Left lung (tissue), 14 donors: ENCODE measurements at regions of chr14 and their contacts with region 1.

Region 1: GRCh38 chr14:57317316-57317715 is 48.5 kb downstream of the AP5M1 start:
- DNase-seq: peak in 3 of 4 donors; percentile 51 to 78 (median 61)
- ATAC-seq: peak; percentile 93
- H3K4me3 ChIP-seq: no peak overlapping the region
- H3K27ac ChIP-seq: no peak overlapping the region
- H3K4me1 ChIP-seq: no peaks in the 10 kb centered on the region
- H3K27me3 ChIP-seq: peaks cover 0 to 4% of the 10 kb centered on the region in 2 donors
- CTCF ChIP-seq: peak; percentile 74 to 88

Region 2: GRCh38 chr14:56491299-56492285 is 825.7 kb before region 1 on chr14:
- intact Hi-C with region 1: loop called in 1 of 2 experiments (anchors 5 kb)
- DNase-seq: peak in 1 of 4 donors; percentile 44
- ATAC-seq: peak; percentile 79
- H3K4me3 ChIP-seq: no peak overlapping the region
- H3K27ac ChIP-seq: no peak overlapping the region
- H3K4me1 ChIP-seq: peaks cover 0 to 5% of the 10 kb centered on the region in 2 donors
- H3K27me3 ChIP-seq: no peaks in the 10 kb centered on the region
- CTCF ChIP-seq: peak; percentile 51 to 74